Mammary epithelial cell (primary cell): ENCODE measurements at regions of chr10 and their contacts with region 1.

Region 1: GRCh38 chr10:126658928-126659327 is 11.6 kb downstream of the C10orf90 start:
- DNase-seq: no peak
- H3K4me3 ChIP-seq: no peak overlapping the region
- H3K27ac ChIP-seq: no peak overlapping the region
- H3K4me1 ChIP-seq: no peaks in the 10 kb centered on the region
- H3K27me3 ChIP-seq: no peaks in the 10 kb centered on the region
- CTCF ChIP-seq: no peak

Region 2: GRCh38 chr10:126599949-126600682 is 58.8 kb before region 1 on chr10:
- CTCF ChIA-PET with region 1: no interaction called
- dilution Hi-C with region 1: loop called (anchors 5 kb)
- in situ Hi-C with region 1: no loop called
- intact Hi-C with region 1: no loop called
- DNase-seq: no peak
- H3K4me3 ChIP-seq: no peak overlapping the region
- H3K27ac ChIP-seq: no peak overlapping the region
- H3K4me1 ChIP-seq: no peaks in the 10 kb centered on the region
- H3K27me3 ChIP-seq: peaks cover 2% of the 10 kb centered on the region
- CTCF ChIP-seq: no peak

Region 3: GRCh38 chr10:126628746-126629145 is 30.2 kb before region 1 on chr10:
- CTCF ChIA-PET with region 1: no interaction called
- dilution Hi-C with region 1: no loop called
- in situ Hi-C with region 1: no loop called
- intact Hi-C with region 1: no loop called
- DNase-seq: no peak
- H3K4me3 ChIP-seq: no peak overlapping the region
- H3K27ac ChIP-seq: no peak overlapping the region
- H3K4me1 ChIP-seq: no peaks in the 10 kb centered on the region
- H3K27me3 ChIP-seq: no peaks in the 10 kb centered on the region
- CTCF ChIP-seq: no peak

Region 4: GRCh38 chr10:126783806-126784557 is 125.1 kb after region 1 on chr10:
- CTCF ChIA-PET with region 1: no interaction called
- dilution Hi-C with region 1: no loop called
- in situ Hi-C with region 1: no loop called
- intact Hi-C with region 1: no loop called
- DNase-seq: no peak
- H3K4me3 ChIP-seq: no peak overlapping the region
- H3K27ac ChIP-seq: no peak overlapping the region
- H3K4me1 ChIP-seq: no peaks in the 10 kb centered on the region
- H3K27me3 ChIP-seq: no peaks in the 10 kb centered on the region
- CTCF ChIP-seq: no peak